BJ (cell line): ENCODE measurements at regions of chr1 and their contacts with region 1.

Region 1: GRCh38 chr1:116570358-116571200 is at the start of gene CD58:
- DNase-seq: peak; percentile 30
- H3K4me3 ChIP-seq: peak within 1 kb of the TSS; percentile 87
- H3K27me3 ChIP-seq: no peaks in the 10 kb centered on the region
- CTCF ChIP-seq: peak; percentile 59
- polyA plus RNA-seq, gene CD58: 11.7 and 18.9 TPM in 2 replicates

Region 2: DNA sequence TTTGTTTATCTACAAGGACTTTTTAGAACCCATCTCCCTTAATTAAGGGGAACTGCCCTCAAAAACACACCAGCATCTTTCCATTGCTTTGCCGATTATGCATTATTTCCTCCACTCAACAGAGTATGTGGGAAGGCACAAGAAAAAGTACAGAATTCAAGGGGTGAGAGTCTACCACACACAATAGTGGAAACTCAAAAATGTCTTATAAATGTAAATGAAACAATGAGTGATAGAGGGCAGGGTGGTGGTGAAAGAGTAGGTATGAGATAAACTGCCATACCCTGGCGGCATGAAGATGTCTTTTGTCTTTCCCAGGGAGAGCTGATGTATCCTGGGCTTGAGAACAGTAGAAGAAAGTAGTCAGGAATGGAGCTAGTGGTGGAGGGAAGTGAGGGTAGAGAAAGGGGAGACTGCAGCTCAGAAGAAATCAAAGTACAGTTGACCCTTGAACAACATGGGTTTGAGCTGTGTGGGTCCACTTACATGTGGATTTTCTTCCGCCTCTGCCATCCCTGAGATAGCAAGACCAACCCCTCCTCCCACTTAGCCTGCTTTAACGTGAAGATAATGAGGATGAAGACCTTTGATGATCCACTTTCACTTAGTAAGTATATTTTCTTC is 24.1 kb before region 1 on chr1:
- CTCF ChIA-PET with region 1: no interaction called
- POLR2A ChIA-PET with region 1: no interaction called
- DNase-seq: no peak
- H3K4me3 ChIP-seq: no peak overlapping the region
- H3K27me3 ChIP-seq: no peaks in the 10 kb centered on the region
- CTCF ChIP-seq: no peak

Region 3: DNA sequence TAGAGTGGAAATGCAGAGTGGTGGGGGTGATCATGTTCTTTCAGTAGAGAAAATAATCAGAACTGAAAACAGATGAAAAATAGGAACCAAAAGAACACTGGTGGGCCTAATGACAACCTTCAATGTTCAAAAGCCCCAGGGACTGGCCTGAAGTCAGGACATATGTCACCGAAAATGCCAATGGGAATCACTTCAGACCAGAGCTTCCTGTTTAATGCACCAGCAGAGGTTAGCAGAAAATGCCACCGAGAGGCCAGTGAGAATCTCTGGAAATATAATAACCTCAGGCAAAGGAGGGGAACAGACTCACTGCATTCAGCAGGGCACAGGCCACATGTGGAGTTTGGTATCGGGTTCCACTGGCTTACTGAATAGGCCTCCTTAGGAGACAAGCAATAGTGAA is 16.2 kb after region 1 on chr1:
- CTCF ChIA-PET with region 1: interaction called, 23 read pairs
- POLR2A ChIA-PET with region 1: no interaction called
- DNase-seq: no peak
- H3K4me3 ChIP-seq: no peak overlapping the region
- H3K27me3 ChIP-seq: no peaks in the 10 kb centered on the region
- CTCF ChIP-seq: no peak

Region 4: DNA sequence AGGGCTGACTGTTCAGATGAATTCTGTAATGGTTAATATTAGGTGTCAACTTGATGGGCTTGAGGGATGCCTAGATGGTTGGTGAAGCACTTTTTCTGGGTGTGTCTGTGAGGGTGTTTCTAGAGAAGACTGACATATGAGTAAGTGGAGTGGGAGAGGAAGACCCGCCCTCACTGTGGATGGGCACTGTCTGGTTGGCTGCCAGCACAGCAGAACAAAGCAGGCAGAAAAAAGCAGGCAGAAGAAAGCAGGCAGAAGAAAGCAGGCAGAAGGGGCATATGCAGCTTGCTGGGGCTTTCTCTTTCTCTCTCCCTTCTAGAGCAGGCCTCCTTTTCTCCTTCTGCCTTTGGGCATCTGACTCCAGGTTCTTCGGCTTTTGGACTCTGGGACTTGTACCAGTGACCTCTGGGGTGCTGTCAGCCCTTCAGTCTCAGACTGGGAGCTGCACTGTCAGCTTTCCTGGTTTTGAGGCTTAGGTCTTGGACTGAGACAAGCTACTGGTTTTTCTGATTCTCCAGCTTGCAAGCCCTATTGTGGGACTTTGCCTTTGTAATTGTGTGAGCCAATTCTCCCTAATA is 140.8 kb after region 1 on chr1:
- CTCF ChIA-PET with region 1: no interaction called
- POLR2A ChIA-PET with region 1: no interaction called
- DNase-seq: no peak
- H3K4me3 ChIP-seq: no peak overlapping the region
- H3K27me3 ChIP-seq: no peaks in the 10 kb centered on the region; the same call in 1 of the 2 replicates
- CTCF ChIP-seq: no peak